Stomach (tissue), 19 donors: ENCODE measurements at regions of chr10 and their contacts with region 1.

Region 1: DNA sequence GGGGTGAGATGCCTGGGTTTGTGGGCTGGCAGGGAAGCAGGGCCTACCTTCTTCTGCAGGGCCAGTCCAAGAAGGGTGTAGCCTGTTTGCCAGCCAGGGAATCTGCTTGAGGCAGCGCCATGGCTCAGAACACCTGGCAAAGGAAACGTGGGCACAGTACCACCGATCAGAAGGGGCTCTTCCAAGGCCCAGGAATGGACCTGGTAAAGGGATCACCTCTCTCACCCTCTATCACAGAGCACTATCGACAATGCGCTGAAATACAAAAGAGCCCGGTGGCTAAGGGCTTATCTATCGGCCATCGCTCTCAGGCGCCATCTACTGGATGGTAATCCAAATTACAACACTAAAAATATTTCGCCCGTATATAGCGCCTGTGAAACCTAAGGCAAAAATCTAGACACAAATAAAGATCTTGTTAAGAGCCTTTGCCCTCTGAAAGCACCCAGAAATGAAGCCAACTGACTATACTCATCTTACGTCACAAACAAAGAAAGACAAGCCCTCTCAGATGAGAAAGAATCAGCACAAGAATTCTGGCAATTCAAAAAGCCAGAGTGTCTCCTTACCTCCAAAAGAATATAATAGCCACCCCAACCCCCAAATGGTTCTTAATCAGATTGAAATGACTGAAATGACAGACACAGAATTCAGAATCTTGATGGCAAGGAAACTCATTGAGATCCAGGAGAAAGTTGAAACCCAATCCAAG is 217.8 kb upstream of the HPS1 start:
- DNase-seq: peak in 1 of 2 donors; percentile 17
- H3K4me3 ChIP-seq: no peak overlapping the region
- H3K27ac ChIP-seq: no peak overlapping the region
- H3K4me1 ChIP-seq: no peaks in the 10 kb centered on the region
- H3K27me3 ChIP-seq: no peaks in the 10 kb centered on the region
- CTCF ChIP-seq: peak in 3 of 7 experiments; percentile 17 to 32 (median 20)
- EP300 ChIP-seq: no peak
- POLR2A ChIP-seq: no peak

Region 2: DNA sequence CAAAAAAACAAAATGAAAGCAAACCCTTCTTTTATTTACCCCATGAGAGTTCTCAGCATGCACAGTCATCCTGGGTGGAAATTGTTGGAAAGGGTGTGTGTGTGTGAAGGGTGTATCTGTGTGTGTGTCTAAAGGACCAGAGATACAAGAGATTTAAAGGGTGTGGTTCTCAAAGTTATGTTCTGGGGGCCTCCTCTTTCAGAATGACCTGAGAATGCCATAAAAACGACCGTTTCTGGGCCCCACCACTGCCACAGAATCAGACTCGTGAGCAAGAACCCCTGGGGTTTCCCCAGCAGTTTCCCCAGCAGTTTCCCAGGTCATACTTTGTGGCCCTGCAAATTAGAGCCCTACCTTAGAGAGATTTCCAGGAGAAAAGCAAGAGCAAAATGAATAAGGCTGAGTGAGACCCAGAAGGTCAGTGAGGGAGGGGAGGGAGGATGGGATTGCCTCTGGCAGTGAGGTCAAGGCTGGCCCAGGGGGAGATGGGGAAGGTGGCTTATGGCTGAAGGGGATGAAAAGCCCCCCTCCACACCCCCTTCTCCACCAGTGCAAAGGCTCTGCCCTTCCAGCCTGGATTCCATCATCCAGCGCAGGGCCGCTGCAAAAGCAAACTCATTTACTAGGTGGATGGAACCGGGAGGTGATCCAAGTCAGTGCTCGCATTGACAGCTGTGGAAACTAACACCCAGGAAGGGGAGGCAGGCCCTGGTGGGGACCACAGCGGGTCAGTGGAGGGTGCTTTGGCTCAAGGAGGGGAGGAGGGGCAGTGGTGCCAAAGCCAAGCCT is 259.7 kb before region 1 on chr10:
- intact Hi-C with region 1: no loop called
- DNase-seq: peak in 1 of 2 donors; percentile 53
- H3K4me3 ChIP-seq: no peak overlapping the region
- H3K27ac ChIP-seq: peak overlapping the region in 4 of 5 donors; percentile 36 to 84 (median 59)
- H3K4me1 ChIP-seq: peaks cover 0 to 36% (median 21%) of the 10 kb centered on the region in 4 donors
- H3K27me3 ChIP-seq: no peaks in the 10 kb centered on the region
- CTCF ChIP-seq: no peak
- EP300 ChIP-seq: no peak
- POLR2A ChIP-seq: no peak

Region 3: GRCh38 chr10:98474628-98475027 is 189.9 kb before region 1 on chr10:
- intact Hi-C with region 1: loop called (anchors 10 kb)
- DNase-seq: no peak
- H3K4me3 ChIP-seq: no peak overlapping the region
- H3K27ac ChIP-seq: no peak overlapping the region
- H3K4me1 ChIP-seq: no peaks in the 10 kb centered on the region
- H3K27me3 ChIP-seq: no peaks in the 10 kb centered on the region
- CTCF ChIP-seq: no peak
- EP300 ChIP-seq: no peak
- POLR2A ChIP-seq: no peak

Region 4: DNA sequence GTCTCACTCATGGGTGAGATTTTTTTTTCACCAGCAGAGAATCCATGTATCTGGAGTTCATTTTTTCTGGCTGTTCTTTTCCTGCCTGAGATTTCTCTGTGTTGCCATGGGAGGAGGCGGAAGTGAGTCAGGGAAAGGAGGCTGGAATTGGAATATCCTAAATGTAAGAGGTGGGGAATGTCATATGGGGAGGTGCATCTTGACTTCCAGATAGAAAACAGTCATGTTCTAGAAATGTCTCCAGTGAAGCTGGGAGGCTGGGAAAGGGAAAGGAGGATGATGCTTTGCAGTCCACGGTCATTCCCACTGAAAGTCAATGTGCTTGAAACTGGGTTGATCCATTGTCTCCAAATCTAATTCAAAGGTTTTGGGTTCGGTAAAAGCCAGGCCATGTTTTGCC is 178.1 kb before region 1 on chr10:
- intact Hi-C with region 1: no loop called
- DNase-seq: no peak
- H3K4me3 ChIP-seq: no peak overlapping the region
- H3K27ac ChIP-seq: no peak overlapping the region
- H3K4me1 ChIP-seq: peaks cover 0 to 4% (median 0%) of the 10 kb centered on the region in 4 donors
- H3K27me3 ChIP-seq: no peaks in the 10 kb centered on the region
- CTCF ChIP-seq: no peak
- EP300 ChIP-seq: no peak
- POLR2A ChIP-seq: no peak